Common myeloid progenitor, CD34-positive (primary cell): ENCODE measurements at regions of chr1 and their contacts with region 1.

Region 1: GRCh38 chr1:22105611-22106207 is 37.2 kb downstream of the WNT4 start:
- DNase-seq: peak; percentile 55 to 80 (median 78)
- H3K4me3 ChIP-seq: no peak overlapping the region
- H3K27ac ChIP-seq: no peak overlapping the region
- H3K4me1 ChIP-seq: no peaks in the 10 kb centered on the region
- H3K27me3 ChIP-seq: no peaks in the 10 kb centered on the region

Region 2: DNA sequence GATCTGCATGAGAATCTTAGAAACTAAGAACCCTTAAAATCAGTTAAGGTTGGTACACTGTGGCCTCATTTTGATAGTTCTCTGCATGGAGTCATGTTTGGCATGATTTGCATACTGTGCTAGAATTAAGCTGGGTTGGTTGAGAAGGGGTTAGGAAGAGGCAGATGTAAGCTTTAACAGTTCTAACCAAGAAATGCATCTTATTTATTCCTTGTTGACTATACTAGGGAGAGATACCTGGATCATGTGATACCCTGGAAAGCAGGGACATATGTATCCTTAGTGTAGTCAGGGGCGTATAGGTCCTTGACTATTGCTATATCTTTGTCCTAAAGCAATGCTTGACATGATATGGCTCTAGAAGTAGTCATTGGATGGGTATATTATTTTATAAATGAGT is 12.2 kb before region 1 on chr1:
- CTCF ChIA-PET with region 1: interaction called, 13 read pairs
- POLR2A ChIA-PET with region 1: no interaction called
- DNase-seq: no peak
- H3K4me3 ChIP-seq: no peak overlapping the region
- H3K27ac ChIP-seq: no peak overlapping the region
- H3K4me1 ChIP-seq: peaks cover 31 to 43% (median 36%) of the 10 kb centered on the region in 4 experiments
- H3K27me3 ChIP-seq: no peaks in the 10 kb centered on the region

Region 3: DNA sequence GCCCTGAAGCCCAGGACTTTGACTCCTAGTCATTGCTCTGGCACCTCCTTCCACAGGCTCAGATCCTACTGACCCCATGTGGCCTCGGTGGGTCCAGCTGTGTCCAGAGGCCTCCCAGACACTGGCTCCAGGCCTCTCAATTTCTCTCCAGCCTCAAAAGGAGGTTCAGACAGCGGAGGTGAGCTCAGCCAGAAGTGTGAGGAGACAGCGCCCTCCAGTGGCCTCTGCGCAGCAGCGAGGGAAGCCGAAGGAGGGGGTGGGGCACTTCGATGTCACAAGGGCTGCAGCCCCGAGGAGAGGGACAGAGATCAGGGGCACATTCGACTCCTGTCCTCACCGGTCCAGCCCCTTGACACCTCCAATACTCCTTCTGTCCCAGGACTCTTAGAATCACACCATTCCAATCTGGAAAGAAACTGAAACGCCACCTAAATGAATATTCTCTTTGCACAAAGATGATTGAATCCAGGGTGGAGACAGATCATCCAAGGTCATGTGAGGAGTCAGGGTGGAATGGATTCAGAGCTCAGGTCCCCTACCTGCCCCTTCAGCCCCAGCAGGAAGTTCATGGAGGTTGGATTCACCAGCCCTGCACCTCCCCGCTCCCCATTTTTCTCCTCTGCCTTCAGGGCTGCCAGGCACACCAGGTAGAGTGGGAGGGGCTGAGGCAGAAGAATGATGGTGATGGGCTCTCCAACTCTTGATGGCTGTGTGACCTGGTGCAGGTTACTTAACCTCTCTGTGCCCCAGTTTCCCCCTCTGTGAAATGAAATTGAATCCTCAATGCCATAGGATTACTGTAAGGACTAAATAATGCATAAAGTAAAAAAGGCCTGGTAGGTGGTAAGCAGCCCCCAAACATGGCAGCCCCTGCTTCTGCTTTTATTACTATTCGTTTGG is 311.1 kb after region 1 on chr1:
- CTCF ChIA-PET with region 1: interaction called, 17 read pairs
- POLR2A ChIA-PET with region 1: no interaction called
- DNase-seq: peak; percentile 71 to 84 (median 78)
- H3K4me3 ChIP-seq: no peak overlapping the region
- H3K27ac ChIP-seq: no peak overlapping the region
- H3K4me1 ChIP-seq: peaks cover 0 to 4% (median 1%) of the 10 kb centered on the region in 4 experiments
- H3K27me3 ChIP-seq: peaks cover 0 to 48% (median 8%) of the 10 kb centered on the region in 5 experiments